Brain microvascular endothelial cell (primary cell): ENCODE measurements at regions of chr12 and their contacts with region 1.

Region 1: GRCh38 chr12:95623585-95624042 is 72.3 kb upstream of the USP44 start:
- DNase-seq: peak; percentile 83
- H3K4me3 ChIP-seq: no peak overlapping the region
- H3K27ac ChIP-seq: peak overlapping the region; percentile 55
- H3K27me3 ChIP-seq: no peaks in the 10 kb centered on the region
- CTCF ChIP-seq: peak; percentile 91

Region 2: GRCh38 chr12:95548539-95549391 is 74.8 kb before region 1 on chr12:
- in situ Hi-C with region 1: no loop called
- DNase-seq: no peak
- H3K4me3 ChIP-seq: peak overlapping the region; percentile 51
- H3K27ac ChIP-seq: no peak overlapping the region
- H3K27me3 ChIP-seq: no peaks in the 10 kb centered on the region
- CTCF ChIP-seq: no peak

Region 3: GRCh38 chr12:95820102-95820703 is 196.6 kb after region 1 on chr12:
- in situ Hi-C with region 1: loop called (anchors 25 kb)
- DNase-seq: peak; percentile 49
- H3K4me3 ChIP-seq: no peak overlapping the region
- H3K27ac ChIP-seq: no peak overlapping the region
- H3K27me3 ChIP-seq: no peaks in the 10 kb centered on the region
- CTCF ChIP-seq: peak; percentile 71